ENCODE measurements at regions of chr7 and their contacts with region 1.

Region 1: DNA sequence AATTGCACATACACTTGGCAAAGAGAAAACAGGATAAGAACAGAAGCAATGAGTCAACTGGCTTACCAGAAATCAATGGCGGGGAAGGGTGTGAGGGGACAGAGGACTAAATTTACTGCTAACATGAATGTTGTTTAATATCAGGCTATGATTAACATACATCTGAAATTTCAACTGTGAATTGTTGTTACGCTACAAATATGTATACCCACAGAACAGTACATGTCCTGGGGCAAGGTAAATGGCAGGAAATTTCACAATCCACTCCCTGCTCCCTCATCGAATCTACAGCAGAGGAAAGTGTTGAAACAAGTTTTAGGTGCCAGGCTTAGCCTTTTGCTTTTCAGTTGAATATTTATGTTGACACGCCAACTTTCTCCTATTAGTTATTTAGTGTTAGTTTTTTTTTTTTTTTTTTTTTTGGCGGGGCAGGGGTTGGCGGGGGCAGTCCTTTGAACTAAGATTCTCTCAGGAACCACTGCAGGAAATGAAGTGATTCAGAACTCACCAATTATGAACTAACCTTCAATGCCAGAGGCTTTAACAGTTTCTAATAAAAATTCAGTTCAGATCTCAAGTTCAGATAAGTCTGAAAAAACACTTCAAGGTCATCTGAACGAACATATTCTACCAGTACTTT is 99.0 kb downstream of the UBE2H start:
- DNase-seq: peak; percentile 97
- H3K4me3 Mint-ChIP-seq: peak overlapping the region; percentile 54
- H3K27ac Mint-ChIP-seq: peak overlapping the region; percentile 92
- H3K4me1 Mint-ChIP-seq: peaks cover 52% of the 10 kb centered on the region
- H3K27me3 Mint-ChIP-seq: no peaks in the 10 kb centered on the region
- CTCF ChIP-seq: no peak

Region 2: GRCh38 chr7:129831424-129832112 is 22.2 kb before region 1 on chr7:
- CTCF ChIA-PET with region 1: interaction called, 9 read pairs
- POLR2A ChIA-PET with region 1: interaction called, 13 read pairs
- intact Hi-C with region 1: no loop called
- DNase-seq: peak; percentile 64
- H3K4me3 Mint-ChIP-seq: no peak overlapping the region
- H3K27ac Mint-ChIP-seq: peak overlapping the region; percentile 87
- H3K4me1 Mint-ChIP-seq: peaks cover 32% of the 10 kb centered on the region
- H3K27me3 Mint-ChIP-seq: no peaks in the 10 kb centered on the region
- CTCF ChIP-seq: no peak

Region 3: GRCh38 chr7:129864042-129864441 is 10.3 kb after region 1 on chr7:
- CTCF ChIA-PET with region 1: no interaction called
- POLR2A ChIA-PET with region 1: interaction called, 19 read pairs
- intact Hi-C with region 1: no loop called
- DNase-seq: peak; percentile 76
- H3K4me3 Mint-ChIP-seq: no peak overlapping the region
- H3K27ac Mint-ChIP-seq: peak overlapping the region; percentile 82
- H3K4me1 Mint-ChIP-seq: peaks cover 21% of the 10 kb centered on the region
- H3K27me3 Mint-ChIP-seq: no peaks in the 10 kb centered on the region
- CTCF ChIP-seq: no peak

Measured in MCF 10A (cell line).